OCI-LY7 (cell line): ENCODE measurements at regions of chr10 and their contacts with region 1.

Region 1: DNA sequence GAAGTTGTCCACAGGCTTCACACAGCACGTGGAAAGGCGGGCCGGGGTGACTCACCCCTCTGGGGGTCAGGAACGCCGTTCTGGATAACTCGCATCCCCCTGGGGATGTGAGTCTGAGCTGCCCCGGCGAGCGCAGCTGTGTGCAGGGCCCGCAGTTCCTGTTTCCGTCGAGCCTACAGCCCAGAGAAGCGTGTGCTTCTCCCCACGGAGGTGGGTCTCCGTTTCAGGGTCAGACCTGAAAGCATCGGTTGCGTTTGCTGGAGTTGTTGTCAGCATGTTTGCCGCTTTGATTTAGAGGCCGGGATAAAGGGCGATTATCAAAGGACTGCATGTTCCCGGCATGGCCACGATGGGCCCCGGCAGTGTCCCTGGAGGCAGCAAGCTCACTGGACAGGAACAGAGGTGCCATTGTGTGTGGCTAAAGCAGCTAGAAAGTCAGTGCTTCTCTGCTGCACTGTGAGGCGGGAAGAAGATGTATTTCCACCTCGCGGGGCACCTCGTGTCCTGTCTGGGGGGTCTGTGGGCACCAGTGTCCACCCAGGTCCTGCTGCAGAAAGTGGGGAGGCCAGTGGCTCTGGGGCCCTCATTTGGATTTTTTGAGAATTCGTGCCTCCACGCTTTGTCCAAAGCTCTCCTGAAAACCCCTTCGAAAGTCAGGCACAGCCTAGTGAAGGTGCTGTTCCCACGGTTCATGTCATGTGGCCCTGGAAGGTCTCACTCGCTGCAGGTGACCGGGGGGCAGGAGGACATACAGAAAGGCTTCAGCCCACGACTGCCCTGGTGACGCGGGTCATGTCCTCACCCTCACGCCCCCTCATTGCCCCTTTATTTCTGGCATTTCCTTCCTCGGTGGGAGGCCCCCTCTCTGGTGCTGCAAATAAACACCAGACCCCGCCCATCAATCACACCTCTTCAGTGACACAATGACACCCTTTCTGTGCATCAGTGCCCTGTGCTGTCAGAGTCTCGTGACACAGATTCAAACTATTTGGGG is 27.4 kb upstream of the GDI2 start:
- DNase-seq: peak; percentile 98
- H3K4me3 ChIP-seq: peak overlapping the region; percentile 65
- H3K27ac ChIP-seq: peak overlapping the region; percentile 98
- H3K4me1 ChIP-seq: peaks cover 64% of the 10 kb centered on the region
- CTCF ChIP-seq: no peak

Region 2: GRCh38 chr10:5659702-5660528 is 180.7 kb before region 1 on chr10:
- CTCF ChIA-PET with region 1: no interaction called
- POLR2A ChIA-PET with region 1: interaction called, 3 read pairs
- intact Hi-C with region 1: loop called (anchors 5 kb)
- DNase-seq: peak; percentile 83
- H3K4me3 ChIP-seq: peak overlapping the region; percentile 30
- H3K27ac ChIP-seq: peak overlapping the region; percentile 100
- H3K4me1 ChIP-seq: peaks cover 98% of the 10 kb centered on the region
- CTCF ChIP-seq: no peak

Region 3: DNA sequence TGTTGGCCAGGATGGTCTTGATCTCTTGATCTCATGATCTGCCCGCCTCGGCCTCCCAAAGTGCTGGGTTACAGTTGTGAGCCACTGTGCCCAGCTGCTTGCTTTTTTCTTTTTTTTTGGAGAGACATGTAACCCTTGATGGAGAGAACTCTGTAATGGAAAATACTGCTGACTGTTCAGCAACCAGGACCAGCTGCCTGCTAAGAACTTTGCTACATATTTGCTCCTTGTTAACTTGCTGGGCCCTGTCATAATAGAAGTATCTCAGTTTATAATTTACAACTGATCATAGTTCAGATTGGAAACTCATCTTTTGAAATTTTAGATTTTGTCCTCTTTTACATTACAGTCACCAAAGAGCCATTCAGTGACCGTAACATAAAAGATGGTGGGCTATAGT is 121.1 kb before region 1 on chr10:
- CTCF ChIA-PET with region 1: no interaction called
- POLR2A ChIA-PET with region 1: interaction called, 12 read pairs
- intact Hi-C with region 1: no loop called
- DNase-seq: no peak
- H3K4me3 ChIP-seq: no peak overlapping the region
- H3K27ac ChIP-seq: no peak overlapping the region
- H3K4me1 ChIP-seq: peaks cover 34% of the 10 kb centered on the region
- CTCF ChIP-seq: no peak

Region 4: DNA sequence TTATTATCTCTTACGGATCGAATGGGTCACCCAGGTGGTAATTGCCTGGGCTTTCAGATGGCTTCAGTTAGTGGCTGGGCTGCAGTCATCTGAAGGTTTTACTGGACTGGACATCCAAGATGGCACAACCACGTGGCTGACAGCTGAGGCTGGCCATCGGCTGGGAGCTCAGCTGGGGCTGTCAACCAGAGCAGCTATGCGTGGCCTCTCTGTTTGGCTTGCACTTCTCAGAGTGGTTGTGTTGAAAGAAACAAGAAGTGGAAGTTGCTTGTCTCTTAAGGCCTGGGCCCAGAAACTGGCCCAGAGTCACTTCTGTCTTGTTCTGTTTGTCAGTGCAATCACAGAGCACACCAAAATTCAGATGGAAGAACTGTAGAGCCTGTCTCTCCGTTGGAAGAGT is 21.7 kb before region 1 on chr10:
- CTCF ChIA-PET with region 1: no interaction called
- POLR2A ChIA-PET with region 1: interaction called, 144 read pairs
- intact Hi-C with region 1: loop called (anchors 1 kb)
- DNase-seq: peak; percentile 50
- H3K4me3 ChIP-seq: no peak overlapping the region
- H3K27ac ChIP-seq: no peak overlapping the region
- H3K4me1 ChIP-seq: peaks cover 63% of the 10 kb centered on the region
- CTCF ChIP-seq: no peak

Region 5: DNA sequence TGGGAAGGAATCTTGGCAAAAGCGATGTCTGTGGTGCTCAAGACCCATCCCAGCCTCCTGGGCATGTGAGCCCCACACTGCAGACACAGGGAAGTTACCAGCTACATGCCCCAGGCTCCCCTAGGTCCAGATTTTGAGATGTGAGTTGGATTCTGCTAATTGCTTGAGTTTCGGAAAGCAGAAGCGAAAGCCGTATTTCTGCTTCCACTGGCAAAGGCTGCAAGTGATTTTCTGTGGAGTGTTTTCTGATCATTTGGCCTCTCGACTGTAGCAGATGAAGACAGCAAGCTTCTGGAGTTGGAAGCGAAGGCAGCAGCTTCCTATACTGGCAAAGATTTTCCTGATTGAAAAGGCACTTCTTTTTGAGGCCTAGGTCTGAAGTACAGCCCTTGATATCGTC is 19.5 kb after region 1 on chr10:
- CTCF ChIA-PET with region 1: interaction called, 4 read pairs
- POLR2A ChIA-PET with region 1: interaction called, 40 read pairs
- intact Hi-C with region 1: no loop called
- DNase-seq: no peak
- H3K4me3 ChIP-seq: no peak overlapping the region
- H3K27ac ChIP-seq: no peak overlapping the region
- H3K4me1 ChIP-seq: peaks cover 13% of the 10 kb centered on the region
- CTCF ChIP-seq: no peak

Region 6: DNA sequence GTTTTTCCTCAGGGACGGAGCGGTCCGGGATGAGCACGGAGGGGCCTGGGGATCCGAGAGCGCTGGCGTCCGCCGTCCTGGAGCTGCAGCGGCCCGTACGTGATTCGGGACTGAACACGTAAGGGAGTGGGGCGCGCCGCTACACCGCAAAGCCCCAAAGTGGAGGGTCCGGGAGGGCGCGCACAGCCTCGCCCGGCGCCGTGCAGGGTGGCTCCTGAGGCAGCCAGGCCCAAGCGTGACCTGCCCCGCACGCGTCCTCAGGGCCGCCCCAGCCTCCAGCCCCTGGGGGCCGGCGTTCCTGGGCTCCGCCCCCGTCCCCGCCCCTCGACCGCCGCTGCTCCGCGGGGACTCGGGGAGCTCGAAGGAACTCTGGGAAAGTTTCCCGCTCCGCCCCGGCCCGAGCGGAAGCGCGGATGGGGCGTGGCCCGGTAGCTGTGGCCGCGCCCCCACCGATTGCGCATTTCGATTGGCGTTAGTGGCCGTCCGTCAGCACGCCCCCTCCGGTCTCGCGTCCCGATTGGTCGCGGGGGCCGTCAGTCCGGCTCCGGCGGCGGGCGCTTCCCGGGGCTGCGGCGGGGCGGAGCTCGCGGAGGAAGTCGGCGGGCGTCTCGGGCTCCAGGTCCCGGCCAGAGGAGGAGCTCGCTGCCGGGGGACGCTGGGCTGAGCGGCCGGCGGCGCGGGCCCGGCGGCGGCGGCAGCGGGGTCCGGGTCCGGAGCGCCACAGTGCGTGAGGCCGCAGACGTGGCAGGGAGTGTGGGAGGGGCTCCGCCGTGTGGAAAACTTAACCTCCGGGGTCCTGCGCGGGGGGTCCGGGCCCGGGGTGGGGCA is 49.2 kb after region 1 on chr10 and contains the starts of genes ANKRD16 and FBH1:
- CTCF ChIA-PET with region 1: no interaction called
- POLR2A ChIA-PET with region 1: interaction called, 20 read pairs
- intact Hi-C with region 1: no loop called
- DNase-seq: peak; percentile 99
- H3K4me3 ChIP-seq: peak within 1 kb of the TSS; percentile 88
- H3K27ac ChIP-seq: peak within 1 kb of the TSS; percentile 35
- H3K4me1 ChIP-seq: peaks cover 26% of the 10 kb centered on the region
- CTCF ChIP-seq: no peak
- total RNA-seq, gene ANKRD16: 7.9 and 15.2 TPM in 2 replicates
- total RNA-seq, gene FBH1: 61.9 and 65.6 TPM in 2 replicates

Region 7: GRCh38 chr10:6136215-6137201 is 295.9 kb after region 1 on chr10:
- CTCF ChIA-PET with region 1: no interaction called
- POLR2A ChIA-PET with region 1: no interaction called
- intact Hi-C with region 1: no loop called
- DNase-seq: no peak
- H3K4me3 ChIP-seq: no peak overlapping the region
- H3K27ac ChIP-seq: no peak overlapping the region
- H3K4me1 ChIP-seq: peaks cover 23% of the 10 kb centered on the region
- CTCF ChIP-seq: no peak